HepG2 (cell line): ENCODE measurements at regions of chr2 and their contacts with region 1.

Region 1: DNA sequence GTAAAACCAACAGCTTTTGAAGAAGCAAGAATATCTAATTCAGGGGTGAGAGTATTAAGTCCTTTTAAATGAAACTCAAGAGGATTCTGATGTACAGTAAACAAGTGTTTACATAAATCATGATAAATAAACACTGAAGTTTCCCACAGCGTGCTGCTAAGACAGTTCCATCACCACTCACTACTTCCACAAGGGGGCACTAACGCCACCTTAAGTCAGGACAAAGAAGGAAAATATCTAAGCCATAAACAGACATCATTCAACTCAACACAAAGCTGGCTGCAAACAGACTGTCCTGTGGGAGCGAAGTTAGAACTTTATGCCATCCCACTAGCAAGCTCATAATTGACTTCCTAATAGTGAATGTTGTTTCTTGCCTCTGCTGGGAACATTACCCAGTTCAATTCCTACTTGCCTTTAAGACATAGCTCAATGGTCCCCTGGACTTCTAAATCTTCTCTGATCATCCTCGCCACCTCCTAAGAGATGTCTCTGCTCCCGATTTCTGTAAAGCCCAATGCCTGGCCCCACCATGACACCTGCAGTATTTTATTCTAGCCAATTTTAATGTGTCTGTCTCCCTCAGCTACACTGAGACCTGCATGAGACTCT is 36.5 kb downstream of the MRPL44 start:
- DNase-seq: peak; percentile 77
- ATAC-seq: peak; percentile 44
- H3K4me3 ChIP-seq: no peak overlapping the region
- H3K27ac ChIP-seq: no peak overlapping the region
- H3K4me1 ChIP-seq: peaks cover 61% of the 10 kb centered on the region
- H3K27me3 ChIP-seq: no peaks in the 10 kb centered on the region
- CTCF ChIP-seq: peak; percentile 92
- EP300 ChIP-seq: no peak
- POLR2A ChIP-seq: no peak
- RAD21 ChIP-seq: peak; percentile 86

Region 2: DNA sequence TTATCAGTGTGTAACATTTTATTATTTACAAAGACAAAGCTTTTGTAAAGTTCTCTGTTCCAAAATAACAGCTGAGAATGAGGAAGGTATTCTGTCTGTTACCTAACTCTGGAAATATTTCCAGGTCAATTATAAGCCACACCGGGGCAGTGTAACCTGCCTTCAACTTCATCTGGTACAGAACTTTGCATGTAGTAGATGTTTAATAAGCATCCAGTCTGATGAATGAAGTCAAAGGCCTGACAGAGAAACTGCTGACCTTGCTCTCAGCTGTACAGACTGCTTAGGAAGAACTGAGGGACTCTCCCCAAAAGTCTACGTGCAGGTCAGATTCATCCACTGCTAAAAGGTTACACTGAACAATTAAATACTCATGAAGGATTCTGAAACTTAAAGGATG is 91.9 kb before region 1 on chr2:
- CTCF ChIA-PET with region 1: no interaction called
- POLR2A ChIA-PET with region 1: no interaction called
- in situ Hi-C with region 1: no loop called
- intact Hi-C with region 1: no loop called
- DNase-seq: peak; percentile 55
- ATAC-seq: peak; percentile 96
- H3K4me3 ChIP-seq: no peak overlapping the region
- H3K27ac ChIP-seq: no peak overlapping the region
- H3K4me1 ChIP-seq: no peaks in the 10 kb centered on the region
- H3K27me3 ChIP-seq: no peaks in the 10 kb centered on the region
- CTCF ChIP-seq: peak; percentile 57
- EP300 ChIP-seq: no peak
- POLR2A ChIP-seq: no peak
- RAD21 ChIP-seq: peak; percentile 61

Region 3: DNA sequence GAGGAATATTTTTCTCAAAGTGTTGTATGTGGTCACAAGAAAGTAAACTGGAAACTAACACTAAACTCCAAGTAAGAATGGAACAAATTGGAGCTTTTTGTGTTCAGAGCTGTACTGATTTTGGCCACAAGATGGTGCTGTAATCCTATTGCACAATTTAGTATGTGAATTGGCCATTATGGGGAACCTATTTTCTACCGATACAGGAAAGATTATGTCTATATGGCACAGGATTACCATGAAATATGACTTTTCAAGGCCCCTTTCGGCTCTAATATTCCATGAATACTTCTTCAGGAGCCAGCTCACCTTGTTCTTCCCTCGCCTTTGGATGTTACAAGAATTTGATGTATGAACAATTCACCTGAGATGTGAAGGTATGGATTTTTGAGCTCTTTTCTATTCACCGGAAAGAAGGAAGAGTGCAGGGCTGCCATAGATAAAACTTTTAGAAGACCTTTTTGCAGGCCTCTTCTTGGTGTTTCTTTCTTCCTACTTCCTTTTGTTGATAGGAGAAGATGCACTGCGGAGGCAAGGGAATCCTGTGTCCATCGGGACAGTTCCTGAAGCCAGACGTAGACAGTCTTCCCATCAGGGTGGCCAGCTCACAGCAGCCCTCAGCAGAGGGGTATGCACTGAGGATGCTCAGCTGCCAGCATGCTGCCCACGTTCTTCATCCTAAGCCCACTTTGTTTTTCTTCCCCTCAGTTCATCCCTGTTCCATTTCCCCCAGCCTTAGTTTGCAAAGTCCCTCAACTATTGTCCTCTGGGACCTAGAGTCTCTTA is 23.2 kb before region 1 on chr2:
- CTCF ChIA-PET with region 1: interaction called, 16 read pairs
- POLR2A ChIA-PET with region 1: interaction called, 6 read pairs
- in situ Hi-C with region 1: no loop called
- intact Hi-C with region 1: loop called (anchors 1 kb)
- DNase-seq: peak; percentile 66
- ATAC-seq: peak; percentile 62
- H3K4me3 ChIP-seq: no peak overlapping the region
- H3K27ac ChIP-seq: no peak overlapping the region
- H3K4me1 ChIP-seq: peaks cover 16% of the 10 kb centered on the region
- H3K27me3 ChIP-seq: no peaks in the 10 kb centered on the region
- CTCF ChIP-seq: peak; percentile 92
- EP300 ChIP-seq: peak in 1 of 2 experiments; percentile 25; a peak in 1 of 4 replicates
- POLR2A ChIP-seq: no peak
- RAD21 ChIP-seq: peak; percentile 89

Region 4: DNA sequence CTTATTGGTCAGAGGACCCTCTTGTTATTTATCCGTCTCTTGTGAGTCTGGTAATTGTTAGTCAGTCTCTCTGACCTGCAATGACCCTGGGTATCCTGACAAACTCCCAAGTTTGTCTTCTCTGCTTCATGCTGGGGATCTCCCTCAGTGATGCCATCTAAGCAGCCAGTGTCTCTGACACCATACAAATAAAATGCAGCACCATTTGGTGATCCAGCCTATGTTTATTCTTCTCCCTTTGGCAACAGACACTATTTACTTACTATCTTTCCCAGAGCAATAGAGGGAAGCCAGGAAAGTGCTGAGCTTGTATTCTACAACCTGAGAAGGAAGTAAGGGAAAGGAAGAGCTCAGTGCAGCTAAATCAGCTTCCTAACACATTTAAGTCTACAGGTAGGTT is 29.5 kb after region 1 on chr2:
- CTCF ChIA-PET with region 1: no interaction called
- POLR2A ChIA-PET with region 1: no interaction called
- in situ Hi-C with region 1: no loop called
- intact Hi-C with region 1: loop called (anchors 2 kb)
- DNase-seq: peak; percentile 76
- ATAC-seq: peak; percentile 89
- H3K4me3 ChIP-seq: no peak overlapping the region
- H3K27ac ChIP-seq: no peak overlapping the region
- H3K4me1 ChIP-seq: peaks cover 15% of the 10 kb centered on the region
- H3K27me3 ChIP-seq: no peaks in the 10 kb centered on the region
- CTCF ChIP-seq: no peak
- EP300 ChIP-seq: peak in 1 of 2 experiments; percentile 24; a peak in 1 of 4 replicates
- POLR2A ChIP-seq: no peak
- RAD21 ChIP-seq: no peak

Region 5: GRCh38 chr2:224062481-224063297 is 69.0 kb after region 1 on chr2:
- CTCF ChIA-PET with region 1: no interaction called
- POLR2A ChIA-PET with region 1: no interaction called
- in situ Hi-C with region 1: no loop called
- intact Hi-C with region 1: loop called (anchors 2 kb)
- DNase-seq: no peak
- ATAC-seq: peak; percentile 67
- H3K4me3 ChIP-seq: no peak overlapping the region
- H3K27ac ChIP-seq: no peak overlapping the region
- H3K4me1 ChIP-seq: 0 out of 2 replicates have a peak, but pooled peaks cover 5% of the 10 kb centered on the region
- H3K27me3 ChIP-seq: peaks cover 0 to 18% of the 10 kb centered on the region in 2 experiments; a peak in 2 of 5 replicates
- CTCF ChIP-seq: peak; percentile 41
- EP300 ChIP-seq: no peak
- POLR2A ChIP-seq: no peak
- RAD21 ChIP-seq: no peak

Region 6: GRCh38 chr2:224145751-224146355 is 152.1 kb after region 1 on chr2:
- CTCF ChIA-PET with region 1: no interaction called
- POLR2A ChIA-PET with region 1: interaction called, 12 read pairs
- in situ Hi-C with region 1: no loop called
- intact Hi-C with region 1: loop called (anchors 2 kb)
- DNase-seq: peak; percentile 98
- ATAC-seq: peak; percentile 83
- H3K4me3 ChIP-seq: peak overlapping the region in 1 of 3 experiments; percentile 36; a peak in 2 of 6 replicates
- H3K27ac ChIP-seq: peak overlapping the region; percentile 93
- H3K4me1 ChIP-seq: peaks cover 84% of the 10 kb centered on the region
- H3K27me3 ChIP-seq: no peaks in the 10 kb centered on the region
- CTCF ChIP-seq: no peak
- EP300 ChIP-seq: peak; percentile 71 to 95; a peak in 3 of 4 replicates
- POLR2A ChIP-seq: no peak
- RAD21 ChIP-seq: no peak

Region 7: DNA sequence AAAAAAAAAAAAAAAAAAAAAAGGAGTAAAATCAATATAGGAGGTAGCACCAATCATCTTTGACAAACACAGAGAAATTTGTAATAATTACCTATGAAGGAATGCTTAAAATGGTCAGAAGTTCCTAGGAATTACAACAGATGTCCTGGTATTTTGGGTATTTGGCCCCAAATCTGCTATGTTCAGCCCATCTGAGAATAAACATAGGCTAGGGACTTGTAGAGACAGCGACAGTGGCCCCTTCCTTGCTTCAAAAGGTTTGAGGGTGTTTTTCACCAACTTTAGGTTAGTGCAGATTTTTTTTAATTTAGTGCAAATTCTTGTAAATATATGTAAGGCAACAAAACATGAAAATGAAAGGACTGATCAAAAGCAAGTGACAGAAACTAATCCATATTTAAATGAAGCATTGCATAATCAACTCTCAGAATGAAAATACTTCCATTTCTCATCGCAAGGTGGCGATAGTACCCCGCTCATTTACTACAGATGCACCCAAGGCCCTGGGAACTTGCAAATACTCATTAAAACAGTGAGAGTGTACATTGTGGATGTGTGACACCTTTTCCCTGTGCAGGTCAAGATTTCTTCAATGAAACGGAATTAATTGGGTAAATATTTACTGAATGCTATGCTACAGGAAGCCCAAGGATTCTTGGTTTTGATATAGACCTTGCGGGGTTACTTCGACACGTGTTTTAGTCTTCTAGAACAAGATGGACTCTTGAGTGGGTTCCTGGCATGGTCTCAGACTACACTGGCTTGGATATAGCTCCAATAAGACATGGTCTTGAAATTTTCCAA is 363.6 kb after region 1 on chr2:
- CTCF ChIA-PET with region 1: no interaction called
- POLR2A ChIA-PET with region 1: no interaction called
- in situ Hi-C with region 1: loop called (anchors 5 kb)
- intact Hi-C with region 1: loop called (anchors 5 kb)
- DNase-seq: peak; percentile 58
- ATAC-seq: peak; percentile 86
- H3K4me3 ChIP-seq: no peak overlapping the region
- H3K27ac ChIP-seq: no peak overlapping the region
- H3K4me1 ChIP-seq: no peaks in the 10 kb centered on the region
- H3K27me3 ChIP-seq: peaks cover 0 to 10% of the 10 kb centered on the region in 2 experiments; a peak in 2 of 5 replicates
- CTCF ChIP-seq: peak; percentile 90
- EP300 ChIP-seq: no peak
- POLR2A ChIP-seq: no peak
- RAD21 ChIP-seq: peak; percentile 65

Region 8: DNA sequence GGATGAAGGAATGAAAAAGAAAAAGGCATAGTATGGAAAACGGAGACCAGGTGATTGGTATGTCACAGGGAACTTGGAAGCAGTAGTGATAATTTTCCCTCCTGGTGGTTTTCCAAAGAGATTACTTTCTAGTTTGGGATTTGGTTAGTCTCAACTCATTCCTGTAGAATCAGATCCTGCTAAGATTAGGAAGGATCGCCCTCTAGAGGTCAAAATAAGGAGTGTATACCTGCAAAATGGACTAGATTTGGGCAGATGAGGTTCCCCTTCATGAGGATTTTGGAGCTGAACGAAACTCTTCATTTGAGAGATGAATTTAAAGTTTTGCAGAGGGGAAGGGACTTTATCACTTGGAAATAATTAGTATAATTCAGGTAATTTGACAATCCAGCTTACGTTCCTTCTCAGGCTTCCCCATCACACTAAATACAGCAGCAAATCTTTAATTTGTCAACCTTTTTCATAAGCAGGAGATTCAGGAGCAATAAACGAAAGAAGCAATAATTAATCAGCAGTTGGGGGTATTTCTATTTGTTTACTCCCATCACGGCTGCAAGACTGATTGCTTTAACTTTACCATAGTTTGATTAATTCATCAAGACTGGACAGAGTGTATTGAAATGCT is 657.2 kb after region 1 on chr2:
- CTCF ChIA-PET with region 1: no interaction called
- POLR2A ChIA-PET with region 1: no interaction called
- in situ Hi-C with region 1: loop called (anchors 10 kb)
- intact Hi-C with region 1: loop called (anchors 5 kb)
- DNase-seq: peak; percentile 57
- ATAC-seq: peak; percentile 90
- H3K4me3 ChIP-seq: no peak overlapping the region
- H3K27ac ChIP-seq: no peak overlapping the region
- H3K4me1 ChIP-seq: no peaks in the 10 kb centered on the region
- H3K27me3 ChIP-seq: no peaks in the 10 kb centered on the region
- CTCF ChIP-seq: peak; percentile 82
- EP300 ChIP-seq: no peak
- POLR2A ChIP-seq: no peak
- RAD21 ChIP-seq: peak; percentile 66